Lower leg skin (tissue), 4 donors: ENCODE measurements at regions of chr9 and their contacts with region 1.

Region 1: DNA sequence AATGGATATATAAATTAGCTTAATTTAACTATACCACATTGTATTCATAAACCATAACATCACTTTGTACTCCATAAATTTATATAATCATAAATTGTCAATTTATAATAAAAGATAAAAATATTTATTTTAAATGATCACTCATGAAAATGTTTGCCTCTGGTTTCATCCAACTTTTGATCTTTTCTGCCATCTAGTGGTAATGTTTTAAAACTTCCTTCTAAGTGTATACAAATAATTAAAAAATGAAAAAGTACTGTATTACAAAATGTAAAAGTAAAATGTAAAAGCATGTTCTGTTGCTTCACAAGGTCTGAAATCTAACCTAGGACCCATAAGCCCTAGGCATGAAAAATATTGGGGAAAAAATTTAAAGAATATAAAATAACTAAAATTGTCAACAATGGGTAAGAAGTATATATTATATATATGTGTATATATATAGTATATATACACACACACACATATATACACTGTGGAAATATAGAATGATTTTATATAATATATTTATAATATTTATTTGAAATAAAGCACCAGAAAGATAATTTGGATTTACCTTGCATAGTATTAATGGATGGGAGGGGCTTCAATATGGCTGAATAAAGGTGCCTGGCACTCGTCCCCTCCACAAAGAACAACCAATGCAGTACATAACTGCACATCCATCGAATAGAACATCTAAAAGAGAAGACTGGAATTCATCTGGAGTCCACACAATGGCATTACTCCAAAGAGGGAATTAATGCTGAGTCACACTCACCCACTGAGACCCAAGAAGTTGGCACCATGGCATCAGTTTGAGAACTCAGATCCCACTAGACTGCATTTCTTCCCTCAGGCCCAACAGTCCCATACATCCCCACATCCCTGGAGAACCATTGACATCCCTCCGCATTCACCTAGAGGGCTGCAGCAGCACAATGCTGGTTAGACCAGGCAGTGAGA is 32.5 kb downstream of the ANXA1 start:
- DNase-seq: no peak
- H3K4me3 ChIP-seq: no peak overlapping the region
- CTCF ChIP-seq: no peak
- POLR2A ChIP-seq: no peak

Region 2: GRCh38 chr9:73104921-73105320 is 79.3 kb before region 1 on chr9:
- intact Hi-C with region 1: loop called (anchors 5 kb)
- DNase-seq: no peak
- H3K4me3 ChIP-seq: no peak overlapping the region
- CTCF ChIP-seq: no peak
- POLR2A ChIP-seq: no peak

Region 3: DNA sequence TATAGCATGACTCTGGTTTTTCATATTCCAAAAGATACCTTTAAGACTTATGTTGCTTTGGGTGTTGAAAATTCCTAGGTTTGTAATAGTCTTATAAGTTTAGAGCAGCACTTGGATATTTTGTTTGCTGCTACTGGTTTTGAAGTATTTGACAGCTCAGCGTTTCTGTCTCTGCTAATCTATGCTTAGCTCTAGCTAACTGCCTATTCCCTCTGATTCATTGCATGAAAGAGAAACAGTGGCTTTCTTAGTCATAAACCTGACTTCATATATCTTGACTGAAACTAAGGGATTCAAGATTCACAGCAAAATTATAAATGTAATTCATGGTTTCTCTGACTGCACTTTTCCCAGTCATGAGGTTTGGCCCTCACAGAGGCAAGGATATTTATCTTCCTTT is 68.2 kb before region 1 on chr9:
- intact Hi-C with region 1: loop called (anchors 5 kb)
- DNase-seq: no peak
- H3K4me3 ChIP-seq: no peak overlapping the region
- CTCF ChIP-seq: no peak
- POLR2A ChIP-seq: no peak

Region 4: DNA sequence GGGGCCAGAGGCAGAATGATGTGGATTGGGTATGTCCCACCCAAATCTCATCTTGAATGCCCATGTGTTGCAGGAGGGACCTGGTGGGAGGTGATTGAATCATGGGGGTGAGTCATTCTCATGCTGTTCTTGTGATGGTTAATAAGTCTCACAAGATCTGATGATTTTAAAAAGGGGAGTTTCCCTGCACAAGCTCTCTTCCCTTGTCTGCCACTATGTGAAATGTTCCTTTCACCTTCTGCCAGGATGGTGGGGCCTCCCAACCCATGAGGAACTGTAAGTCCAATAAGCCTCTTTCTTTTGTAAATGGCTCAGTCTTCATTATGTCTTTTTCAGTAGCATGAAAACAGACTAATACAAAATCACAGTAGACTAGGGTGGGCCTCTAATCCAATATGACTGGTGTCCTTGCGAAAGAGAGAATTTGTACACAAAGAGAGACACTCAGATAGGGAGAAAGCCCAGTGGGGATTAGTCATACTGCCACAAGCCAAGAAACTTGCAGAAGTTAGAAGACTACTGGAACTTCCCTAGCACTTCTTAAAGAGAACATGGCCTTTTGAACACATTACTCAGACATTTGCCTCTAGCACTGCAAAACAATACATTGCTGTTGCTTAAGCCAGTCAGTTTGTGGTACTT is 35.9 kb after region 1 on chr9:
- intact Hi-C with region 1: no loop called
- DNase-seq: peak in 1 of 2 donors; percentile 32
- H3K4me3 ChIP-seq: no peak overlapping the region
- CTCF ChIP-seq: no peak
- POLR2A ChIP-seq: no peak